ENCODE measurements at regions of chr2 and their contacts with region 1.

Region 1: GRCh38 chr2:3780477-3781402 is 77.4 kb downstream of the DCDC2C start:
- DNase-seq: no peak
- H3K4me3 ChIP-seq: no peak overlapping the region
- CTCF ChIP-seq: peak; percentile 63

Region 2: GRCh38 chr2:3536682-3537632 is 243.8 kb before region 1 on chr2:
- CTCF ChIA-PET with region 1: no interaction called
- POLR2A ChIA-PET with region 1: no interaction called
- DNase-seq: no peak
- H3K4me3 ChIP-seq: peak overlapping the region; percentile 58
- CTCF ChIP-seq: peak; percentile 54

Region 3: GRCh38 chr2:3728104-3729054 is 52.4 kb before region 1 on chr2:
- CTCF ChIA-PET with region 1: interaction called, 23 read pairs
- POLR2A ChIA-PET with region 1: no interaction called
- DNase-seq: peak; percentile 14
- H3K4me3 ChIP-seq: no peak overlapping the region
- CTCF ChIP-seq: peak; percentile 33

Region 4: DNA sequence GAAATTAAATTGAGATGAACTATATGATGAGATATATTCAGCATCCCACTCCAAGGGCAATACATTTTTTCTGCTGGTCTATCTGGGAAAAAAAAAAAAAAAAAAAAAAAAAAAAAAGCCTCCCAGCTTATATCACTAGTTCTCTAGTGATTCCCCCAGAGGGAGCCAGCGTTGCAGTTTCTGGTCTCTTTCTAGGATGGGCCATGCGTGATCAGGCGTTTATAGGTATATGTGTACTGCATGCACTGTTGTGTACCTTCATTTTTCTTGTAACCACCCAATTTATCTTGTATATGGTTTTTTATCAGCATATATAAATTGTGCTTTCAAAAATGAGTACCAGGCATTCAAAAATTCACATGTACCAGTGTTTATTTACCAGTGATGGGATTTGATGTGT is 42.3 kb before region 1 on chr2:
- CTCF ChIA-PET with region 1: interaction called, 17 read pairs
- POLR2A ChIA-PET with region 1: no interaction called
- DNase-seq: no peak
- H3K4me3 ChIP-seq: no peak overlapping the region
- CTCF ChIP-seq: peak; percentile 24

Region 5: GRCh38 chr2:3801506-3801905 is 20.8 kb after region 1 on chr2:
- CTCF ChIA-PET with region 1: no interaction called
- POLR2A ChIA-PET with region 1: no interaction called
- DNase-seq: no peak
- H3K4me3 ChIP-seq: no peak overlapping the region
- CTCF ChIP-seq: no peak

Region 6: GRCh38 chr2:3986063-3986462 is 205.3 kb after region 1 on chr2:
- CTCF ChIA-PET with region 1: no interaction called
- POLR2A ChIA-PET with region 1: no interaction called
- DNase-seq: no peak
- H3K4me3 ChIP-seq: no peak overlapping the region
- CTCF ChIP-seq: no peak

Measured in AG04449 (cell line).